ENCODE measurements at regions of chr17 and their contacts with region 1.

Region 1: DNA sequence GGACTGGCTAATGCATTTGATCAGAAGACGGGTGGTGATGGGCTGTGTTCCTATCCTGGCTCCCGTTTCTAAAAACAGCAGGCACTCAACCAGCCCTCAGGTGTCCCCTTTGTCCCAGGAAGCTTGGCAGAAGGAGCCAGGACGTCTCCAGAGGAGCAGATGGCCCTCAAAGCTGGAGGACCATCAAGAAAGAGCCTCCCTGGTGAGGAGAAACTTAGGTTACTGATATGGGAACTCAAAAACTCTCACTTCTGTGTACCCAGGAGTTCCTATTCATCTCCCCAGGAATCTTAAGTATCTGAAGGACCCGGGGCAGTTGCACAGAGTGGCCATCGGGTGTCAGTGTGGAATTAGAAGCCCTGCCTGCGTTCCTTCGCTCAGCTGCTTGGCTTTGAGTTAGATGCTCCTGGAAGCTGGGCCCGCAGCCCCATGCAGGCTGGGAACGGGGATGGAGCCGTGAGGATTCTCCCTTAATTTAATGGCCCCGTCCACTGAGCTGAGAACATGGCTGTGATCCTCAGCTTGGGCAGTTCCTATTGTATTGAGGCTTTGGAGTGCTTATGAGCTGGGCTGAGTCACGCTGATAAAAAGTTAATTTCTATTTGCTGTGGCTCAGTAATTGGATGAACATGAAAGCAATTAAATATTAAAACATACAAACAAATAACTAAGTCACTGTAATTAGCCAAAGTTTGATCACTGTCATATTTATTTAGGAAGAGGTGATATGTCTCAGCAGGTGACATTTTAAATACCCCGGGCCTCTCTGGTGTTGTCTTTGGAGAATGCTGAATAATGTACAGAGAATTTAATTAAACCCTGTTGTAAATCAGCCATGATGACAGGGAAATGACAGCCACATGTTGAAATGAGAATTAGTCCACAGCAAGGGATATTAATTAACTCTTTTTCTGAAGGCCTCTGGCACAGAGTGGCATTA is 402.1 kb downstream of the SEC14L1 start:
- DNase-seq: peak; percentile 78 to 80
- H3K4me3 ChIP-seq: no peak overlapping the region
- H3K4me3 Mint-ChIP-seq: no peak overlapping the region
- H3K27ac Mint-ChIP-seq: no peak overlapping the region
- H3K4me1 ChIP-seq: no peaks in the 10 kb centered on the region
- H3K4me1 Mint-ChIP-seq: no peaks in the 10 kb centered on the region
- H3K27me3 ChIP-seq: no peaks in the 10 kb centered on the region; the same call in 1 of the 2 replicates
- H3K27me3 Mint-ChIP-seq: peaks cover 21% of the 10 kb centered on the region
- CTCF ChIP-seq: peak; percentile 89 to 94

Region 2: DNA sequence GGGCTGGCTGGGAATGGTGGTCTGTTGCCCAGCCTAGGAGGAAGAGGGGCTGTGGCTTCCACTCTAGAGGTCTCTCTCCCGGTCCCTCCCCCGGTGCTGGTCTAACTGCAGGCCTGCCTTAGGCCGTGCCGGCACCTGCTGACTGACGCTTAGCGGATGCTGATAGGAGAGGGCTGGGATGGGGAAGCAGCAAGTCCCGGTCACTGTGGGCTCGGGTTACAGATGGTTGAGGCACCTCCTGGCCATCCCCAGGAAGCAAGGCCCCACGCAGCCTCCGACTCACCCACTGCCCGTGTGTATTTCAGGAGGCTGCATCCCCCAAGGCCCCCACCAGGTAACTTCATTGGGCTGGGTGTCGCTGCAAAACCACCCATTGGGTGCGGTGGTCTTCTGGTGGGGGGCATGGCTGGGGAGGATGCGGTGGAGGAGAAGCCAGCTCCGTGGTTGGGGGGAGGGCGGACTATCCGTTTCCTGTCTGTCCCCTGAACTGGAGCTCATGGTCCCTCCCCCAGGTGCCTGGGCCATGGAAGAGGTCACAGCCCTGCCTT is 123.2 kb before region 1 on chr17:
- CTCF ChIA-PET with region 1: no interaction called
- POLR2A ChIA-PET with region 1: no interaction called
- intact Hi-C with region 1: no loop called
- DNase-seq: peak; percentile 64 to 79
- H3K4me3 ChIP-seq: no peak overlapping the region
- H3K4me3 Mint-ChIP-seq: no peak overlapping the region
- H3K27ac Mint-ChIP-seq: peak overlapping the region; percentile 39
- H3K4me1 ChIP-seq: peaks cover 62% of the 10 kb centered on the region
- H3K4me1 Mint-ChIP-seq: peaks cover 12% of the 10 kb centered on the region
- H3K27me3 ChIP-seq: no peaks in the 10 kb centered on the region
- H3K27me3 Mint-ChIP-seq: no peaks in the 10 kb centered on the region
- CTCF ChIP-seq: no peak

Region 3: DNA sequence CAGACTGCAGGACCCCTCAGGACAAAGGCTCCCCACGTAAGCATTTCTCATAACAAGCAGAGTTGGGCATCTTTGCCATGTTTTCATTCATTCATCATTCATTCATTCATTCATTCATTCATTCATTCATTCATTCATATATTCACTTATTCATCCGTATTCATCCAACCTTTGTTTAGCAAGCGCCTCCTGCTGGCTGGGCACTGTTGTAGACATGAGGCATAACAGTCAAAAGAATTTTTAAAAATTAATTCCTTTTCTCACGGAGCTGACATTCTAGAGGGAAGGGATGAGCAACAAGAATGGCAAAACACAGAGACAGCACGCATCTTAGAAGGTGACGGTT is 64.0 kb after region 1 on chr17:
- CTCF ChIA-PET with region 1: no interaction called
- POLR2A ChIA-PET with region 1: no interaction called
- intact Hi-C with region 1: loop called (anchors 1 kb)
- DNase-seq: no peak
- H3K4me3 ChIP-seq: no peak overlapping the region
- H3K4me3 Mint-ChIP-seq: no peak overlapping the region
- H3K27ac Mint-ChIP-seq: no peak overlapping the region
- H3K4me1 ChIP-seq: no peaks in the 10 kb centered on the region
- H3K4me1 Mint-ChIP-seq: no peaks in the 10 kb centered on the region
- H3K27me3 ChIP-seq: no peaks in the 10 kb centered on the region
- H3K27me3 Mint-ChIP-seq: peaks cover 27% of the 10 kb centered on the region
- CTCF ChIP-seq: peak; percentile 24

Region 4: DNA sequence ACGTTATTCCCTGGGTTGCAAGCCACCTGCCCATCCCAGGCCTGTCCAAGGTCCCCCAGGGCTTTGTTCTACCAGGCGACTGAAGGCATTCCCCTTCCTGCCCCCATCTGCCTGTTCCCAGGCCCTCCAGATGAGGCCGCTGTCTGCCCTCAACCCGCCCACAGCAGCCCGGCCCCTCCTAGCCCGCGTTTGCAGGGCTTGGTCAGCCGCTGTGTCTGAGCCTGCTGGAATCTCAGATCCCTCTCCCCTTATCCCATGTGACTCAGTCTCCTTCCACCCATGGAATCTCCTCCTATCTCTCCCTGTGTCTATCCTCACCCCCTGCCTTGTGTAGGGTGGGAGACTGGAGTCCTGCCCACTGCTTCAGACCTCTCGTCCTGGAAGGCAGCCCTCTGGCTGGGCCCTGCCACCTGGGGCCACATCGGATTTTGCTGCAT is 229.7 kb after region 1 on chr17:
- CTCF ChIA-PET with region 1: no interaction called
- POLR2A ChIA-PET with region 1: no interaction called
- intact Hi-C with region 1: loop called (anchors 1 kb)
- DNase-seq: peak; percentile 63 to 70
- H3K4me3 ChIP-seq: no peak overlapping the region
- H3K4me3 Mint-ChIP-seq: no peak overlapping the region
- H3K27ac Mint-ChIP-seq: no peak overlapping the region
- H3K4me1 ChIP-seq: no peaks in the 10 kb centered on the region
- H3K4me1 Mint-ChIP-seq: peaks cover 6% of the 10 kb centered on the region
- H3K27me3 ChIP-seq: no peaks in the 10 kb centered on the region
- H3K27me3 Mint-ChIP-seq: peaks cover 4% of the 10 kb centered on the region
- CTCF ChIP-seq: peak; percentile 65 to 75

Measured in Caco-2 (cell line).